GM12878 (cell line): ENCODE measurements at regions of chr5 and their contacts with region 1.

Region 1: GRCh38 chr5:38420691-38421390 is 135.6 kb downstream of the LIFR start:
- DNase-seq: no peak
- ATAC-seq: peak; percentile 77
- H3K4me3 ChIP-seq: no peak overlapping the region
- H3K27ac ChIP-seq: no peak overlapping the region
- H3K4me1 ChIP-seq: no peaks in the 10 kb centered on the region
- H3K27me3 ChIP-seq: no peaks in the 10 kb centered on the region
- CTCF ChIP-seq: peak; percentile 59 to 68 (median 60)
- EP300 ChIP-seq: no peak
- POLR2A ChIP-seq: no peak
- RAD21 ChIP-seq: peak; percentile 42

Region 2: DNA sequence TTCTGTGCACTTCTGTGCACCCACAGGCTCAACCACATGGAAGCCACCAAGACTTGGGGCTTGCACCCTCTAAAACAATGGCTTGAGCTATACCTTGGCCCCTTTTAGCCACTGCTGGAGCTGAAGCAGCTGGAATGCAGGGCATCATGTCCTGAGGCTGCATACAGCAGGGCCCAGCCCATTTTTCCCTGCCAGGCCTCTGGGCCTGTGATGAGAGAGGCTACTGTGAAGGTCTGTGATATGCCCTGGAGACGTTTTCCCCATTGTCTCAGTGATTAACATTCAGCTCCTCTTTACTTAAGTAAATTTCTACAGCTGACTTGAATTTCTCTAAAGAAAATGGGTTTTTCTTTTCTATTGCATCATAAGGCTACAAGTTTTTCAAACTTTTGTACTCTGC is 296.5 kb before region 1 on chr5:
- CTCF ChIA-PET with region 1: no interaction called
- POLR2A ChIA-PET with region 1: no interaction called
- RAD21 ChIA-PET with region 1: no interaction called
- SMC1A ChIA-PET with region 1: no interaction called
- in situ Hi-C with region 1: no loop called
- intact Hi-C with region 1: no loop called
- DNase-seq: no peak
- ATAC-seq: no peak
- H3K4me3 ChIP-seq: no peak overlapping the region
- H3K27ac ChIP-seq: no peak overlapping the region
- H3K4me1 ChIP-seq: no peaks in the 10 kb centered on the region
- H3K27me3 ChIP-seq: no peaks in the 10 kb centered on the region
- CTCF ChIP-seq: no peak
- EP300 ChIP-seq: no peak
- POLR2A ChIP-seq: no peak
- RAD21 ChIP-seq: no peak

Region 3: DNA sequence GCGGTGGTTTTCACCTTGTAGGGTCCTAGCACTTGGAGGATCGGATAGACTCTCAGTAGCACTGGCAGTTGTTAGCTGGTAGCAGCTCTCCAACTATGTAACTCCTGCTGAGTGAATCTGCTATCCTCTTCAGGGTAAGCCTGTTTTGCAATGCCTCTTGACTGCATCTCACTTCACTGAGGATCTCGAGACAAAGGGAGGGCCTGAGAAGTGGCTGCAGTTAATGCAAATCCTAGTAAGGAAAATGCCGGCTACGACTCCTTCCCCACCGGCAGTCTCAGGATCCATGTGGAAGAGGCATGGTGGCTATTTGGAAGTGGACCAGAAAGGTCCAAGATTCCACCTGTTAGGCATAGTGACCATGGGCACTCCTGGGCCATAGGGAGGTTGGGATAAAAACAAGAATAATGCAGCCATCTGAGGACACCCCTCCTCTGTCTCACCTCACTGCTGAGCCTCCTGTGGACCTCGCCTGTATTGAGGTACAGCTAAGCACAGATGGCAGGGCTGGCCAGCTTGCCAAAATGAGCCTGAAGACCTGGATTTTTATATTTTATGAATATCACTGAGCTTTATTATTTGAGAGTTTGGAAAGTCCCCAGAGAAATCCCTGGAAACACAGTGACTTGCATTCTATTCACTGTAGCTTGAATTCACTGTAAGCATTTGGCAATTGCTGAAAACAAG is 10.4 kb before region 1 on chr5:
- CTCF ChIA-PET with region 1: interaction called, 13 read pairs
- POLR2A ChIA-PET with region 1: no interaction called
- RAD21 ChIA-PET with region 1: no interaction called
- SMC1A ChIA-PET with region 1: interaction called, 4 read pairs
- in situ Hi-C with region 1: no loop called
- intact Hi-C with region 1: no loop called
- DNase-seq: no peak
- ATAC-seq: no peak
- H3K4me3 ChIP-seq: no peak overlapping the region
- H3K27ac ChIP-seq: no peak overlapping the region
- H3K4me1 ChIP-seq: no peaks in the 10 kb centered on the region
- H3K27me3 ChIP-seq: no peaks in the 10 kb centered on the region
- CTCF ChIP-seq: no peak
- EP300 ChIP-seq: no peak
- POLR2A ChIP-seq: no peak
- RAD21 ChIP-seq: no peak

Region 4: DNA sequence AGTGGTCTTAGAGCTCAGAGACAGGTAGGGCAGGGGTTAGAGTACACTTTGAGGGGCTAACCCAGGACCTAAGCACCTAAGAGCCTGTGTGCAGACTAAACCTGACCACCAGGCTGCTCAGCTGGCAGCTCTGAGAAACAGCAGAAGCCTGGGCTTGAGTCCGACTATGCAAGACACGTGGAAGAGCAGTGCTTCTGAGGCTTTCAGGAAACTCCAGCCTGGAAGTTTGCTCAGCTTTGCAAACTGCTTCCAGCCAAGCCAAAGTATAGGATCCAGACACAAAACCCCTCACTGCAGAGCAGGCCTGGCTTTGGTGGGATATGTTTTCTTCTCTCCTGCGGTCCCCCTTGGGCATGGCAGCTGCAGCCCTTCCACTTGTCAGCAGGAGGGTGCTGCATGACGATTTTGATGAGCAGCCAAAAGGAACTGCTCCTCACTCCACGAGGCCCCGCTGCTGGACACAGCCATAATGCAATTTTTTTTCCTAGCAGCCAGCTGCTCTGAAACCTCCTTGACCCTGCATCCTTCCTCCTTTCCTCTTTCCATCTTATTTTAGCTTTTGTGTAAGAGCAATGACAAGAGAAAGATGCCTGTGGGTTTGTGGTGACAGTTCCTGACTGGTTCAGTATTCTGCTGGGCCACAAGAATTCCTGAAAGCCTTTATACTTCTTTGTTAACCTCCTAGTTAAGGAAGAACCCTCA is 12.5 kb after region 1 on chr5:
- CTCF ChIA-PET with region 1: interaction called, 13 read pairs
- POLR2A ChIA-PET with region 1: no interaction called
- RAD21 ChIA-PET with region 1: interaction called, 3 read pairs
- SMC1A ChIA-PET with region 1: interaction called, 6 read pairs
- in situ Hi-C with region 1: no loop called
- intact Hi-C with region 1: no loop called
- DNase-seq: no peak
- ATAC-seq: no peak
- H3K4me3 ChIP-seq: no peak overlapping the region
- H3K27ac ChIP-seq: no peak overlapping the region
- H3K4me1 ChIP-seq: no peaks in the 10 kb centered on the region
- H3K27me3 ChIP-seq: peaks cover 0 to 4% of the 10 kb centered on the region in 2 experiments; a peak in 1 of 4 replicates
- CTCF ChIP-seq: no peak
- EP300 ChIP-seq: no peak
- POLR2A ChIP-seq: no peak
- RAD21 ChIP-seq: no peak